ENCODE measurements at regions of chr11 and their contacts with region 1.

Region 1: DNA sequence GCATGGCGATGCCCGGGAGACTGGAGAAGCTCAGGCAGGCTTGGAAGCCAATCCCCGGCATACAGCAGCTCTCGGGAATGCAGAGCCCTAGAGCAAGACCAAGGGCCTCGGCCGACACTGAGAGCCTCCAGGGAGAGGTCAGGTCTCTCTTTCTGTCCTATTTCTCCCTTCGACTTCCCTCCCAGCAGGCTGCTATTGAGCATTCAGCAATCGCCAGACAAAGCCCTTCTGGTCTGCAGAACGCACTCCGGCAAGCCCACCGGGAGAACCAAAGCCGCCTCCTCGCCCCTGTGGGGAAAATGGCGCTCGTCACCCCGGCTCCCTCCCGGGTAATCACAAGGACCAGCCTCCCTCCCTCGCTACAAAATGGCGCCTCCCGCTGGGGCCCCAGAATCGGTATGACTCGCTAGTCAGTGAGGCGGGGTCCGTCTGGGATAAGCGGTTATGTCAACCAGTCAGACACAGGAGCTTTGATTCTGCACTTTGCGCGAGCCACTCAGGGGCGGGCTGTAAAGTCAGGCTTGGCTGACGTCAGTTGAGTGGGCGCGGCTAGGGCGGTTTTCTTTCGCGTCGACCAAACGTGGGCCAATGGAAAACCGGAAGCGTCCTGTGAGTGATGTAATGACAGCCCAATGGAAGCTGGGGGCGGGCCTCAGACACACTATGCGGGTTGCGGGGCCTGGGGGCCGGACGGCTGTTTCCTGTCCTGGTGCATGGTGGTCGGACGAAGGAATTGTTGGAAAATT is at the start of gene ZNF143:
- DNase-seq: peak; percentile 100
- ATAC-seq: peak; percentile 85 to 95 (median 86)
- H3K4me3 ChIP-seq: peak within 1 kb of the TSS; percentile 75
- H3K4me3 Mint-ChIP-seq: peak within 1 kb of the TSS; percentile 99
- H3K27ac ChIP-seq: peak within 1 kb of the TSS; percentile 98
- H3K27ac Mint-ChIP-seq: peak within 1 kb of the TSS; percentile 98 to 99
- H3K4me1 ChIP-seq: peaks cover 14% of the 10 kb centered on the region
- H3K4me1 Mint-ChIP-seq: peaks cover 35 to 37% of the 10 kb centered on the region in 2 donors
- H3K27me3 ChIP-seq: no peaks in the 10 kb centered on the region
- H3K27me3 Mint-ChIP-seq: no peaks in the 10 kb centered on the region
- CTCF ChIP-seq: no peak
- total RNA-seq, gene ZNF143: 27.4 to 32.7 (median 32.6) TPM

Region 2: GRCh38 chr11:9150501-9150900 is 310.0 kb before region 1 on chr11:
- intact Hi-C with region 1: no loop called
- DNase-seq: no peak
- ATAC-seq: no peak
- H3K4me3 ChIP-seq: no peak overlapping the region
- H3K4me3 Mint-ChIP-seq: no peak overlapping the region
- H3K27ac ChIP-seq: no peak overlapping the region
- H3K27ac Mint-ChIP-seq: no peak overlapping the region
- H3K4me1 ChIP-seq: no peaks in the 10 kb centered on the region
- H3K4me1 Mint-ChIP-seq: no peaks in the 10 kb centered on the region
- H3K27me3 ChIP-seq: no peaks in the 10 kb centered on the region
- H3K27me3 Mint-ChIP-seq: no peaks in the 10 kb centered on the region
- CTCF ChIP-seq: no peak

Region 3: GRCh38 chr11:9264316-9265210 is 195.9 kb before region 1 on chr11:
- intact Hi-C with region 1: loop called (anchors 1 kb)
- DNase-seq: peak; percentile 30 to 49
- ATAC-seq: peak; percentile 16 to 57 (median 27)
- H3K4me3 ChIP-seq: peak overlapping the region; percentile 85
- H3K4me3 Mint-ChIP-seq: peak overlapping the region; percentile 94
- H3K27ac ChIP-seq: peak overlapping the region; percentile 73
- H3K27ac Mint-ChIP-seq: peak overlapping the region; percentile 93 to 94
- H3K4me1 ChIP-seq: peaks cover 23% of the 10 kb centered on the region
- H3K4me1 Mint-ChIP-seq: peaks cover 22 to 33% of the 10 kb centered on the region in 2 donors
- H3K27me3 ChIP-seq: no peaks in the 10 kb centered on the region
- H3K27me3 Mint-ChIP-seq: peaks cover 0 to under 1% of the 10 kb centered on the region in 2 donors
- CTCF ChIP-seq: no peak

Region 4: DNA sequence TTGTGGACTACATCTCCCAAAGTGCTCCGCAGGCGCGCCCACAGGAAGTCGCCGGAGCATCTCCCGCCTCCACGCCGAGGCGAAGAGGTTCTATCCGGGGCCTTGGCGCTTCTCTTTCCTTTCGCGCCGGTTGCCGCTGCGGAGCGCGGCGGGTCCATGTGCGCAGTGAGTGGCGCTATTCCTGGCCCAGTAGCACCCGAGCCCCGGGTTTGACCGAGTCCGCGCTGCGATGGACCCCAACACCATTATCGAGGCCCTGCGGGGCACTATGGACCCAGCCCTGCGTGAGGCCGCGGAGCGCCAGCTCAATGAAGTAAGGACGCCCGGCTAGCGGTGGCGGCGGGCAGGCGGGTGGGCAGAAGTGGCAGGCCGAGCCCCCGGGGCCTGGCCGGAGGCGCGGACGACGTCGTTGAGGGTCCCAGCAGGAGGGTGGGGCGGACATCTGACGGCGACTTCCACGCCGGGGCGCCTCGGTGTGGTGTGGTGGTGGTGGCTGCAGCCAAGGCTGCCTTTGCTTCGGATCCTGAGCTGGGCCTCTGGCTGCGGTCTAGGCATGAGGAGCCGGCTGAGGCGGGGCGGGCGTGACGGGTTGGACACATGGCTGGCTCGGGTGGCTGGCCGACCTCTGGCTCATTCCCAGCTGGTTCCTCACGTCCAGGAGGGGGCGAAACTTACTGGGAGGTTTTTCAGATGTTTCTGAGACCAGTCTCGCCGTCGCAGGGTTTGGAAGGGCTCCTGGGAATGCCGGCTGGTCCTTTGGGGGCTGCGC is 75.8 kb before region 1 on chr11 and contains the start of gene IPO7:
- intact Hi-C with region 1: loop called (anchors 1 kb)
- DNase-seq: peak; percentile 77 to 92
- ATAC-seq: peak; percentile 97 to 98 (median 97)
- H3K4me3 ChIP-seq: peak within 1 kb of the TSS; percentile 74
- H3K4me3 Mint-ChIP-seq: peak within 1 kb of the TSS; percentile 95
- H3K27ac ChIP-seq: peak within 1 kb of the TSS; percentile 68
- H3K27ac Mint-ChIP-seq: peak within 1 kb of the TSS; percentile 91 to 96
- H3K4me1 ChIP-seq: peaks cover 12% of the 10 kb centered on the region
- H3K4me1 Mint-ChIP-seq: peaks cover 33 to 35% of the 10 kb centered on the region in 2 donors
- H3K27me3 ChIP-seq: no peaks in the 10 kb centered on the region
- H3K27me3 Mint-ChIP-seq: no peaks in the 10 kb centered on the region
- CTCF ChIP-seq: no peak
- total RNA-seq, gene IPO7: 47.2 to 62.3 (median 58.0) TPM

Region 5: GRCh38 chr11:9428706-9429105 is 31.8 kb before region 1 on chr11:
- intact Hi-C with region 1: no loop called
- DNase-seq: no peak
- ATAC-seq: no peak
- H3K4me3 ChIP-seq: no peak overlapping the region
- H3K4me3 Mint-ChIP-seq: no peak overlapping the region
- H3K27ac ChIP-seq: no peak overlapping the region
- H3K27ac Mint-ChIP-seq: no peak overlapping the region
- H3K4me1 ChIP-seq: no peaks in the 10 kb centered on the region
- H3K4me1 Mint-ChIP-seq: no peaks in the 10 kb centered on the region
- H3K27me3 ChIP-seq: no peaks in the 10 kb centered on the region
- H3K27me3 Mint-ChIP-seq: no peaks in the 10 kb centered on the region
- CTCF ChIP-seq: no peak

Region 6: GRCh38 chr11:9573052-9573774 is 112.7 kb after region 1 on chr11 and contains the start of gene WEE1:
- intact Hi-C with region 1: loop called (anchors 1 kb)
- DNase-seq: peak; percentile 96 to 97
- ATAC-seq: peak; percentile 90 to 97 (median 91)
- H3K4me3 ChIP-seq: peak within 1 kb of the TSS; percentile 97
- H3K4me3 Mint-ChIP-seq: peak within 1 kb of the TSS; percentile 92
- H3K27ac ChIP-seq: peak within 1 kb of the TSS; percentile 83
- H3K27ac Mint-ChIP-seq: peak within 1 kb of the TSS; percentile 85 to 90
- H3K4me1 ChIP-seq: peaks cover 17% of the 10 kb centered on the region
- H3K4me1 Mint-ChIP-seq: peaks cover 23 to 33% of the 10 kb centered on the region in 2 donors
- H3K27me3 ChIP-seq: no peaks in the 10 kb centered on the region
- H3K27me3 Mint-ChIP-seq: no peaks in the 10 kb centered on the region
- CTCF ChIP-seq: no peak
- total RNA-seq, gene WEE1: 17.1 to 20.8 (median 19.0) TPM

Region 7: GRCh38 chr11:10540923-10541560 is 1080.5 kb after region 1 on chr11 and contains the start of gene RNF141:
- intact Hi-C with region 1: loop called (anchors 5 kb)
- DNase-seq: peak; percentile 95 to 98
- ATAC-seq: peak; percentile 97 to 99 (median 98)
- H3K4me3 ChIP-seq: peak within 1 kb of the TSS; percentile 78
- H3K4me3 Mint-ChIP-seq: peak within 1 kb of the TSS; percentile 92
- H3K27ac ChIP-seq: peak within 1 kb of the TSS; percentile 84
- H3K27ac Mint-ChIP-seq: peak within 1 kb of the TSS; percentile 87 to 89
- H3K4me1 ChIP-seq: peaks cover 14% of the 10 kb centered on the region
- H3K4me1 Mint-ChIP-seq: peaks cover 18% of the 10 kb centered on the region in 2 donors
- H3K27me3 ChIP-seq: no peaks in the 10 kb centered on the region
- H3K27me3 Mint-ChIP-seq: peaks cover 2 to 7% of the 10 kb centered on the region in 2 donors
- CTCF ChIP-seq: peak; percentile 88
- total RNA-seq, gene RNF141: 10.3 to 13.9 (median 11.7) TPM